HEK293 (cell line): ENCODE measurements at regions of chr14 and their contacts with region 1.

Region 1: GRCh38 chr14:52552063-52552988 is at the starts of genes GPR137C and TXNDC16:
- H3K4me3 ChIP-seq: peak within 1 kb of the TSS; percentile 87
- H3K27ac ChIP-seq: peak within 1 kb of the TSS; percentile 90
- H3K4me1 ChIP-seq: peaks cover 9% of the 10 kb centered on the region
- CTCF ChIP-seq: no peak

Region 2: DNA sequence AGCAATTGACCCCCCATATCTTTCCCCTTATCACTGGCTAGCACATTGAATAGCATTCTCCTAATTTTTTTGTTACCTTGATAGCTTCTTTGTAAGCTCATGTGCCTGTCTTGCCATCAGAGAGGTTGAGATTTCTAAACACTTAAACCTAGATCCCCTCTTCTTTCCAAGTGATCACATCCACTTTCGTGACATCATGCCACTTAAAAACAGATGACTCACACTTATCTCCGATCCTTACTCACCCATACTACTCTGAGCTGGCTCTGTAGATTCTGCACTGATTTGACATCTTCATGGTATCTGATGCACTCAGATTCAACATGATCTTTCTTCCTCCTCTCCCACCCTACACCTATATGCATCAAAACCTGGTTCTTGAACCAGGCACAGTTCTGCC is 10.8 kb after region 1 on chr14:
- CTCF ChIA-PET with region 1: no interaction called
- POLR2A ChIA-PET with region 1: interaction called, 30 read pairs
- H3K4me3 ChIP-seq: no peak overlapping the region
- H3K27ac ChIP-seq: no peak overlapping the region
- H3K4me1 ChIP-seq: no peaks in the 10 kb centered on the region
- CTCF ChIP-seq: no peak

Region 3: DNA sequence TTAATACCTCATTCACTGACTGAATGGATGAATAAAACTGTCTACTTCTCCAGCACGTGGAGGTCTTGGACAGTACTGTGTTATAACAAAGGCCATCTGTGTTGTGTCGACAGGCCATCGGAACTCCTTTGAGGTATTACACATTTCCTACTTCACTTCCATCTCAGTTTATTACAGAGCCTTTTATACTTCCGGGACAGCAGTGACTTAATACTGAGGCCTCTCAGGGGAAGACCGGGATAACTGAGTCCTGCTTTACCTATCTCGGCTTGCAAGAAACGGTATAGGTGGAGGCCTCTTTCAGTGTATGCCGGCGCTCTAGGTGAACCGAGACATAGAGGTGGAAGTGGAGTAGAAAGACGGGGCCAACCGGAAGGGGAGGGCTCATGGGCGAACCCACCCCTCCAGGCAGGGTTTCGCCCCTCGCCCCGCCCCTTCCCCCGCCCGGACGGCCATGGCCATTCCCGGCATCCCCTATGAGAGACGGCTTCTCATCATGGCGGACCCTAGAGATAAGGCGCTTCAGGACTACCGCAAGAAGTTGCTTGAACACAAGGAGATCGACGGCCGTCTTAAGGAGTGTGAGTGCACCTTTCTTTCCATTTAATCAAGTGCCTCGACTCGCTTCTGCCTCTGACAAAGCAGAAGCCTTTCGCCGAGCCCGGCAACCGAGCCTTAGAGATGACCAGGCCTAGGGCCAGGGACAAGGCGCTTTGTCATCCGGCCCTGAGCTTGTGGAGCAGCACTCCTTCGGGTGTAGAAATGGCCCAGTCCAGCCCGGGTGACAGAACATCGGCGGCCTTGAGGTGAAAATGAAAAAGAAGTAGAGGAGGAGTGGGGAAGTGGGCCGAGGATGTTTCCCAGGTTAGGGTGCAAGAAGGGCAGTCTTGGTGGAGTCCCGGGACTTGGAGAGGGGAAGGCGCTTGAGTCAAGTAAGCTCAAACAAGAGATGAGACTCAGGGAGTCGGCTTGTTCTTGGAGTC is 154.7 kb after region 1 on chr14 and contains the start of gene PSMC6:
- CTCF ChIA-PET with region 1: interaction called, 3 read pairs
- POLR2A ChIA-PET with region 1: interaction called, 11 read pairs
- H3K4me3 ChIP-seq: peak within 1 kb of the TSS; percentile 68
- H3K27ac ChIP-seq: peak within 1 kb of the TSS; percentile 75
- H3K4me1 ChIP-seq: peaks cover 7% of the 10 kb centered on the region; the same call in 1 of the 2 replicates
- CTCF ChIP-seq: no peak

Region 4: DNA sequence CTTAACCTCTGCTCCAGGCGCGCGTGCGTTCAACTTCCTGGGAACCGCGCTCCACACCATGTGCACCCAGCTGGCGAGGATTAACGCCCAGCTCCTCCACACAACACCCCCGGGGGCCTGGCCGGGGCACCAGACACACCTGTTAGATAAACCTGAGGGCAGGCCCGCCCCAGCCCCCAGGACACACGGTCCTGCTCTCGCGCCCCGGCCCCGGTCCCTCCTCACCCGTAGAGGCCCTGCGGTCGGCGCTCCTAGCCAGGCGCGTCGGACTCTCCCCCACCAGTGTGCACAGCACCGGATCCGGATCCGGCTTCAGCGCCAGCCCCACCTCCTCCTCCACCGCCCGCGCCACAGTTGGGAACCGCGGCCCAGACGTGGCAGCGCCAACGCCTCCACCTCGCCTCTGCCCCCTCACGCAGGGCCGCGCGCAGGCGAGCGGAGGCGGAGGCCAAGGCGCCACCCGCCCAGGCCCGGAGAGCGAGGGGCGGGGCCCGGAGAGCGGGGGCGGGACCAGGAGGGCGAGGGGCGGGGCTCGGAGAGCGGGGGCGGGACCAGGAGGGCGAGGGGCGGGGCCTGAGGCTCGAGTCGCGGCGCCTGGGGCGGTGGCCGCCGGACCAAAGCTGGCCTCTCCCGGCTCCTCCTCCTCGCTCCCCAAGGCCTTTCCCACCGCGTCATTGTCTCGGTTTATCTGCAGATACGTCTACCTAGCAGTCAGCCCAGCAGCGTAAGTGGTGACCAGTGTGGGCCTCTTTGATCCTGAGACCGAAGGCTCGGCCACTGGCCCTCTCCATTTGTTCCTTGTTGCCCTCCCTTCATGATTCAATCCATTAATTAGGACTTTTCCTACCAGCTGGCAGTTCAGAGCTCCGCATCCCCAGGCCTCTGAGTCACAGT is 239.1 kb after region 1 on chr14 and contains the start of gene GNPNAT1:
- CTCF ChIA-PET with region 1: no interaction called
- POLR2A ChIA-PET with region 1: interaction called, 10 read pairs
- H3K4me3 ChIP-seq: peak within 1 kb of the TSS; percentile 88
- H3K27ac ChIP-seq: peak within 1 kb of the TSS; percentile 92
- H3K4me1 ChIP-seq: 0 out of 2 replicates have a peak, but pooled peaks cover 3% of the 10 kb centered on the region
- CTCF ChIP-seq: peak; percentile 44